ENCODE measurements at regions of chr1 and their contacts with region 1.

Region 1: GRCh38 chr1:201254625-201255506 is 28.4 kb upstream of the PKP1 start:
- DNase-seq: peak; percentile 54 to 57
- H3K4me3 ChIP-seq: no peak overlapping the region
- H3K27ac ChIP-seq: no peak overlapping the region
- H3K4me1 ChIP-seq: peaks cover 0 to 6% of the 10 kb centered on the region in 2 donors
- H3K27me3 ChIP-seq: no peaks in the 10 kb centered on the region
- CTCF ChIP-seq: peak; percentile 90 to 99 (median 96)
- POLR2A ChIP-seq: no peak

Region 2: DNA sequence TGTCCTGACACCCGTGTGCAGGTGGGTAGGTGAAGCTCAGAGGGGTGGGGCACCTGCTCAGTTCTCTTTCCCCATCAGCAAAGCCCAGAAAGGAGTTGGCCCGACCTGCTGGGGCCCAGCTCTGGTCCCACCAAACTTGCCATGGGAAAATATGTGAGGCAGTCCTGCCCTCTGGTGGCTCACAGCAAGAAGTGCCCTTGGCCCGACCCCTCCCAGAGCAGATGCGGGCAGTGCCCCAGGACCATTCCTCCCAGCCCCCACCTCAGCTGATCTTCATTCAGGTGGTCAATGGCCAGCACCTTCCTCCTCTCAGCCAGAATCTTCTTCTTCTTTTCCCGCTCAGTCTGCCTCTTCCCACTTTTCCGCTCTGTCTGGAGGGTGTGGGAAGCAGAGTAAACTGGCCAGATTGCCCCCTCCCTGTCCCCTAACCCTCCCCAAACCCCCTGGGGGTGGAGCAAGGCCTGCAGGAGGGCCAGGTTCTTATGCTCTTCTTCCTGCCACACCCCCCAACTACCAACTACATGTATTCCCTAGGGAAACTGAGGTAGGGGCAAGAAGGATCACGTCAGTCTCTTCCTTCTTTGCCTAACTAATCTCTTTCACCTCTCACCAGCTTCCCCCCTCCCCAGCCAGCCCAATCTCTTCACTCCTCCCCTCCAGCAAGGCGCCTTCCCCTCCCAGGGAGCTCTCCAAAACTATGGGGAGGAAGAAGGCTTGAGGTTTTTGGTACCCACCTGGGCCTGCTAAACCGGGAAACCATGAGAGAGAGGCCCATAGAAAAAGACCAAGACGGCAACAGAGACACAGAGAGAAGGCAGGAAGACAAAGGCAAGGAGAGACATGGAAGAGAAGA is 107.0 kb after region 1 on chr1:
- intact Hi-C with region 1: loop called (anchors 1 kb)
- DNase-seq: peak; percentile 42 to 46
- H3K4me3 ChIP-seq: no peak overlapping the region
- H3K27ac ChIP-seq: no peak overlapping the region
- H3K4me1 ChIP-seq: no peaks in the 10 kb centered on the region
- H3K27me3 ChIP-seq: no peaks in the 10 kb centered on the region
- CTCF ChIP-seq: peak; percentile 57 to 89 (median 77)
- POLR2A ChIP-seq: no peak

Region 3: DNA sequence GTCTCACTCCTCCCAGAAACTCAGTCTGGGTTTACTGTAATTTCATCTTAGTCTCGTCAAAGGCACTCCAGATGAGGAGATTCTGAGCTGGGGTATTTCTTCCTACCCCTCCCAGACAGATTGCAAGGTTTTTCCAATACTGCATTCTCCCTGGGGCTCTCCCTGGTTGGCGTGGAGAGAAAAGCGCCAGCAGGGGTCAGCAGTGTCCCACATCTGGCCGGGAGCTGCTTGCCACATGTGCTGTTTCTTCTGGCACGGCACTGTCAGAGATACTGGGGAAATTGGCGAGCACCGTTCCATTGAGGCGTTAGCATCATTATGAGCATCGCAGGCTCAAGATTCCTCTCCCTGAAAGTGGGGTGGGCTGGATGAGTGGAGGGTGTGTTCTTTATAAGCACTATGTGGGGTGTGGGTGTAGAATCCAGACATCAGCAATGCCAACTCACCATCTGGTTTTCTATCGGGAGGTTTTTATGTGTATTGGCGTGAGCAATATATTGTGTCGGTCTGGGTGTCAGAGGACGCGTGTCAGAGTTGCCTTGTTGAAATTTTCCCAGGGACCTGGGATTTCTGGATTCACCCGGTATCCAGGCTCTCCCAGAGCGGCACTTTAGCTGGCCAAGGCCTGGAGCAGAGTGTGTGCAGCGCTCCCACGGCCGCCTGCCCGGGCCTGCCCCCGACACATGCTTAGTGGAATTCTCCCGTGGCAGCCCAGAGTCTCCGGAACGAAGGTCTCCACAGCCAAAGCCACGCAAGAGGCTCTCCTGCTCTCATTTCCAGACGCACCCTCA is 276.1 kb after region 1 on chr1:
- intact Hi-C with region 1: no loop called
- DNase-seq: peak; percentile 62 to 64
- H3K4me3 ChIP-seq: no peak overlapping the region
- H3K27ac ChIP-seq: peak overlapping the region in 2 of 3 donors; percentile 22 to 28
- H3K4me1 ChIP-seq: peaks cover 0 to 13% of the 10 kb centered on the region in 2 donors
- H3K27me3 ChIP-seq: no peaks in the 10 kb centered on the region
- CTCF ChIP-seq: peak; percentile 36 to 71 (median 49)
- POLR2A ChIP-seq: no peak

Measured in thyroid gland (tissue), 4 donors.